Heart right ventricle (tissue), 16 donors: ENCODE measurements at regions of chr1 and their contacts with region 1.

Region 1: GRCh38 chr1:222643938-222644635 is 26.2 kb downstream of the MIA3 start:
- DNase-seq: peak; percentile 97 to 98
- ATAC-seq: peak; percentile 99 to 100 (median 100)
- H3K4me3 ChIP-seq: peak overlapping the region; percentile 57 to 96 (median 89)
- H3K27ac ChIP-seq: peak overlapping the region; percentile 57 to 99 (median 94)
- H3K4me1 ChIP-seq: peaks cover 0 to 24% (median 16%) of the 10 kb centered on the region in 9 donors
- H3K27me3 ChIP-seq: no peaks in the 10 kb centered on the region
- CTCF ChIP-seq: no peak

Region 2: DNA sequence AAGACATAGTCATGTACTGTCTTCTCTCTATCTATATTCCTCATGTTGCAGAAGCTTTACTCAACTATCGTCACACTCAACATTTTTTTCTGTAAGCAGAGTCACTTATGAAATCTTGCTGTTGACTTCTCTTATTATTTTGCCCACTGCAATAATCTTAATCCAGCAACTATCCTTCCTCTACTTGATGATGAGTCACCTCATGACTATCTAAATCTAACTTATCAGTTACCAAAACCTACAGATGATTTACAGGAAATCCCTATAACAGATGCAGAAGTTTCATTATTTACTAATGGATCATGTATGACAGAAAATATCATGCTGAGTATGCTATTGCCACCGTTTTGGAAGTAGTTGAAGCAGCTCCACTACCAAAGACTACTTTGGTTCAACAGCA is 1281.0 kb before region 1 on chr1:
- intact Hi-C with region 1: no loop called
- DNase-seq: no peak
- ATAC-seq: no peak
- H3K4me3 ChIP-seq: no peak overlapping the region
- H3K27ac ChIP-seq: no peak overlapping the region
- H3K4me1 ChIP-seq: peaks cover 0 to 6% (median 0%) of the 10 kb centered on the region in 9 donors
- H3K27me3 ChIP-seq: no peaks in the 10 kb centered on the region
- CTCF ChIP-seq: no peak

Region 3: DNA sequence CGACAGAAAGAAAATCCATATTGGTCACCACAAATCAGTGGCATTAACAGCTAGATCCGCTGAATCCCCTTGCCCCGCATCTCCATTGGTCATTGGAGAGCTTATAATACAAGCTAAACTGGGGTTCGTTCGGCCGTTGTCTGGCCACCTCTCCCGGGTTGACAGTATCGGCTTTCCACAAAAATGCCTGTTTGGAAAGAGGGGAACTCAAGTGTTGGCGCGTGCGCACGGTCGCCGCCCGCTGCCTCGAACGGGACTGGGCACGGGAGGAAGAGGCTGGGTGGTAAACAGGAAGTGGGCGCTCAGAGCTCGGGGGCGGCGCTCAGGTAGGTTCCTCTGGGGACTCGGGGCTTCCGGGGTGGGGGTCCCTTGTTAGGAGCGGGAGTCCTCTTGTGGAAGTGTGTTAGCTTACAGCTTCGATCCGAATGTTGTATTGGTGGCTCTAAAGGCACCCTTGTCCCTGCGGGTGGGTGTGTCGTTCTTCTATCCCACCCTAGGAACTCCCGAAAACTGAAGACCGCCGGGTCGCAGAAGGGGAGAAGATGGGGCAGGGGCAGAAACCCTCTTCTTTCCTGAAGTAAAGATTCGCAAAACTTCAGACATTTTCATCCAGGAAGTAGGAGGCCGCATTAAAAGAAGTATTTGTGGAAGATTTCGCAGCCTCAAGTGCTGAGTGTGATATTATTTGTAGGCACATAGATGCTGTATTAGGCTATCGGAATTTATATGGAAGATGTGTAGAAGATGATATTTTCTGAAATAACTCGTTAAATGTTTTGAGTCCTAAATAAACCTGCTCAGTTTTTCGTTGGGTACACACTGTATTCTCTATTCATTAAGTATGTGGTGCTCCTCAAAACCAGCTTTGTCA is 69.2 kb after region 1 on chr1:
- intact Hi-C with region 1: loop called in 4 of 10 experiments (anchors 1 to 10 kb)
- DNase-seq: peak; percentile 92 to 94
- ATAC-seq: peak; percentile 85 to 92 (median 90)
- H3K4me3 ChIP-seq: peak overlapping the region; percentile 57 to 97 (median 90)
- H3K27ac ChIP-seq: peak overlapping the region; percentile 92 to 99 (median 94)
- H3K4me1 ChIP-seq: peaks cover 0 to 40% (median 28%) of the 10 kb centered on the region in 9 donors
- H3K27me3 ChIP-seq: no peaks in the 10 kb centered on the region
- CTCF ChIP-seq: no peak